H1 (cell line): ENCODE measurements at regions of chr15 and their contacts with region 1.

Region 1: DNA sequence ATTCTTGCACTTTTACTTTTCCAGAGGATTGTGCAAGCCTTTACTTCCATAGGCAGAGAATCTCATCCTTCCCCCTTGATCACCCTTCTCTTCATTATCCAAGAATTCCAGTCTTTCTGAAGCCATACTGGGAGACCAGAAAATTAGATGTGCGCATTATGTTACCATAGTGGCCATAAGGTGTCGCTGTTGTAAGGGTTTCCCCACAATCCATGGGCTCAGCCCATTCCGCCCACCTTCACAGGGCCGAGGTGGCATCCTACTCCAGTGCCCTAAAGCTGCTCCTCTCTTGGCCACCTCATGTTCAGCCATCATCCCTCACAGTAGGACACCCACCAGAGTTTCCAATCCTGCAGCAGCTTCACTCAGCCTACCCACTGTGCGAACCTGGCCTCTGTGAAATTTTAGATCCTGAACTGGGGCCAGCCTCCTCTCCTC is 35.0 kb downstream of the CTSH start:
- DNase-seq: peak in 1 of 2 experiments; percentile 79
- H3K4me3 ChIP-seq: no peak overlapping the region
- H3K27ac ChIP-seq: no peak overlapping the region
- H3K4me1 ChIP-seq: peaks cover 0 to 3% (median 1%) of the 10 kb centered on the region in 4 experiments; a peak in 3 of 7 replicates
- H3K27me3 ChIP-seq: no peaks in the 10 kb centered on the region
- CTCF ChIP-seq: peak; percentile 59 to 93 (median 86)
- EP300 ChIP-seq: no peak
- POLR2A ChIP-seq: no peak
- RAD21 ChIP-seq: peak; percentile 89 to 90

Region 2: DNA sequence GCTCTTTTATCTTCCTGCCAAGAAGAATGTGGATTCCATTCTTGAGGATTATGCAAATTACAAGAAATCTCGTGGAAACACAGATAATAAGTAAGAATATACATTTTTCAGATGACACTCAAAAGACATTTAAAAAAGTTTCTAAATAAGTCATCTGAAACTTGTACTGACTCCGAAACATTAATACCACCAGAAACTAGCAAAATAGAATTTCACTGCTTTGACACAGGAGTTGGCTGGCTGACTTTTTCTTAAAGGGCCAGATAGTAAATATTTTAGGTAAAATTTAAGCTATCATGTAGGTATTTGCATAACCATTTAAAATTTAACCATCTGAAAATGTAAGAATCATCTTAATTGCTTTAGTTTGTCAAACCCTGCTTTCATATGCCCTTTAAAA is 16.3 kb before region 1 on chr15:
- CTCF ChIA-PET with region 1: interaction called, 34 read pairs
- POLR2A ChIA-PET with region 1: interaction called, 3 read pairs
- DNase-seq: no peak
- H3K4me3 ChIP-seq: no peak overlapping the region
- H3K27ac ChIP-seq: no peak overlapping the region
- H3K4me1 ChIP-seq: no peaks in the 10 kb centered on the region
- H3K27me3 ChIP-seq: no peaks in the 10 kb centered on the region
- CTCF ChIP-seq: no peak
- EP300 ChIP-seq: no peak
- POLR2A ChIP-seq: no peak
- RAD21 ChIP-seq: no peak

Region 3: DNA sequence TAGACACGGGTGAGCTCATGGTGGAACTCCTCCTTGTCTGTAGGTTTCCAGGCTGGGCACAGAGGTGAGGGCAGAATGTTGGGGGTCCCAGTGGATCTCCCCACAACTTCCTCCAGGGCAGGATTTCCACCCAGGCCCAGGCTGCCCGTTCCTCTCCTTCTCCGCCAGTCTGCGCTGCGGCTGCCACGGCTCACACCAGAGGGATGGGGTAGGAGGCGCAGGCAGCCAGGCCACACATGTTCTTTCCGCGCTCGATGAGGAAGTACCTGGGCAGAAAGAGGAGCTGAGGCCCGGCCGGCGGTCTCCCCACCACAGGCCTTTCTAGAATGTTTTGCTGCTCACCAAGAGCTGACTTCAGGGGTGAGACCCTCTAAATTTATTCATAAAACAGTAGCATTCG is 12.1 kb after region 1 on chr15:
- CTCF ChIA-PET with region 1: interaction called, 41 read pairs
- POLR2A ChIA-PET with region 1: interaction called, 3 read pairs
- DNase-seq: no peak
- H3K4me3 ChIP-seq: no peak overlapping the region
- H3K27ac ChIP-seq: no peak overlapping the region
- H3K4me1 ChIP-seq: no peaks in the 10 kb centered on the region
- H3K27me3 ChIP-seq: no peaks in the 10 kb centered on the region
- CTCF ChIP-seq: no peak
- EP300 ChIP-seq: no peak
- POLR2A ChIP-seq: no peak
- RAD21 ChIP-seq: no peak

Region 4: GRCh38 chr15:78968539-78969271 is 58.9 kb after region 1 on chr15:
- CTCF ChIA-PET with region 1: interaction called, 24 read pairs
- POLR2A ChIA-PET with region 1: no interaction called
- DNase-seq: no peak
- H3K4me3 ChIP-seq: peak overlapping the region in 1 of 4 experiments; percentile 12; a peak in 1 of 8 replicates
- H3K27ac ChIP-seq: no peak overlapping the region; the same call in 1 of the 2 replicates
- H3K4me1 ChIP-seq: peaks cover 7 to 19% (median 13%) of the 10 kb centered on the region in 4 experiments; a peak in 5 of 7 replicates
- H3K27me3 ChIP-seq: no peaks in the 10 kb centered on the region
- CTCF ChIP-seq: no peak
- EP300 ChIP-seq: 0 out of 3 replicates have a peak, but pooled peaks of 1 of the 2 experiments have one; percentile 20
- POLR2A ChIP-seq: no peak
- RAD21 ChIP-seq: no peak

Region 5: GRCh38 chr15:78996894-78997275 is 87.1 kb after region 1 on chr15:
- CTCF ChIA-PET with region 1: interaction called, 171 read pairs
- POLR2A ChIA-PET with region 1: interaction called, 8 read pairs
- DNase-seq: no peak
- H3K4me3 ChIP-seq: no peak overlapping the region
- H3K27ac ChIP-seq: no peak overlapping the region
- H3K4me1 ChIP-seq: peaks cover 0 to 25% (median 14%) of the 10 kb centered on the region in 4 experiments; a peak in 5 of 7 replicates
- H3K27me3 ChIP-seq: no peaks in the 10 kb centered on the region; a peak in 1 of 7 replicates
- CTCF ChIP-seq: no peak
- EP300 ChIP-seq: no peak
- POLR2A ChIP-seq: no peak
- RAD21 ChIP-seq: no peak